A549 (cell line): ENCODE measurements at regions of chr20 and their contacts with region 1.

Region 1: DNA sequence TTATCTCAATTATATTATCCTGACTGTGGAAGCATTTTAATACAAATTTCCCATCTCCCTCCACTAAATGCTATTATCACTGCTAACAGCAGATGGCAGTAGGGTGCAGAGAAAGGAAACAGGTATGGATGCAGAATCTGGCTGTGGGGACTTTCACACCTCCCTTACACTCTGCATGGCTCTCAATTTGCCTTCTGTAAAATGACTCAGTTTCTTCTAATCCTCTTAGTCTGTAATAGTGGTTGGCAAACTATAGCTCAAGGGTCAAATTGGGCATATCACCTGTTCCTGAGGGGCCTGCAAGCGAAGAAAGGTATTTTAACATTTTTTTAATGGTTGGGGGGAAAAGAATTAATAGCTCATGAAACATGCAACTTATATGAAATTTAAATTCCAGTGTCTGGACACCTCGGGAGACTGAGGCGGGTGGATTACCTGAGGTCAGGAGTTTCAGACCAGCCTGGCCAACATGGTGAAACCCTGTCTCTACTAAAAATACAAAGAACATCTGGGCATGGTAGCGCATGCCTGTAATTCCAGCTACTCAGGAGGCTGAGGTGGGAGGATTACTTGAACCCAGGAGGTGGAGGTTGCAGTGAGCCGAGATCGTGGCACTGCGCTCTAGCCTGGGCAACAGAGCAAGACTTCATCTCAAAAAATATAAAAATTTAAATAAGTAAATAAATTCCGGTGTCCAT is 83.5 kb downstream of the ZMYND8 start:
- DNase-seq: peak; percentile 67 to 77
- ATAC-seq: peak; percentile 63 to 68; a peak in 4 of 6 replicates
- H3K4me3 ChIP-seq: no peak overlapping the region
- H3K27ac ChIP-seq: peak overlapping the region; percentile 84 to 93
- H3K4me1 ChIP-seq: peaks cover 61% of the 10 kb centered on the region
- CTCF ChIP-seq: peak; percentile 95
- EP300 ChIP-seq: no peak
- POLR2A ChIP-seq: no peak
- RAD21 ChIP-seq: peak; percentile 98 to 99

Region 2: DNA sequence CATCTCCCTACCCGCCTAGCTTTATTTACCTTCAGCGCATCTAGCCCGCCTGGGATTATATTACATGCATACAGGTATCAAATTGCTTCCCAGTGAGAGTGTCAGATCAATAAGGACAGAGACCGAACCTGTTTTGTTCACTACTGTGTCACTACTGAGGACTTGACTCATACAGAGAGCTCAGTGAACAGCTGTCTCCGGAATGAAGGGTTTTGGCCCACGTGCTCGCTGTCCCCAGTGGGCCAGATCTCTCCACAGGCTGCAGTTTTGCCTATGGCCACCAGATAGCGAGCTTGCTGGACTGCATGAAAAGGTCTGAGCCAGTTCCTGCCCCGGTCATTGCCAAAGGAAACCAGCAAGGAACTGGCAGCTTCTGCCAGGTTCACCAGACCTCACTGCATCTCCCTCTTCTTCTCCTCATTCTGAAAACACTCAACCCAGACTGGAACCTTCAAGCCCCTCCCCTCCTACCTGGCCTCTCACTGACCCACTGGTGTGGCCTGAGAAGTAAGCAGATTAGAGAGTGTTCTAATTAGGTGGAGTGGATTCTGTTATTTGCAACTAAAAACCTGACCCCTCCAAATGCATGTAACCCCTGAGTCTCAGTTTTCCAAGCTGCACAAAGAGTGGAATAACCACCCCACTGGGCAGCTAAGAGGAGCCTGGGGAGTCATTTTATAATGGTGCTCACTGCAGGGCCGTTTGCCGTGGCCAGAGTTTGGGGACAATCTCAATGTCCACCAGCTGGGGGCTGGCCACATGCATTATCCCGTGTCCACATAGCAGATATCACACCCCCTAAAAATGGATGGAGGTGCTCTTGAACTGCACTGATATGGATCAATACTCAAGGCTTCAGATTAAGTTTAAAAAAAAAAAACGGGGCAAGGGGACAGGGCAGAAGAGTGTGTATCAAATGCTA is 67.2 kb before region 1 on chr20:
- CTCF ChIA-PET with region 1: interaction called, 78 read pairs
- POLR2A ChIA-PET with region 1: no interaction called
- DNase-seq: peak; percentile 36 to 74
- ATAC-seq: peak; percentile 68 to 73
- H3K4me3 ChIP-seq: no peak overlapping the region
- H3K27ac ChIP-seq: peak overlapping the region; percentile 4 to 87; a peak in 3 of 6 replicates
- H3K4me1 ChIP-seq: peaks cover 16% of the 10 kb centered on the region
- CTCF ChIP-seq: peak; percentile 41
- EP300 ChIP-seq: no peak
- POLR2A ChIP-seq: no peak
- RAD21 ChIP-seq: peak; percentile 43 to 46; a peak in 3 of 5 replicates

Region 3: DNA sequence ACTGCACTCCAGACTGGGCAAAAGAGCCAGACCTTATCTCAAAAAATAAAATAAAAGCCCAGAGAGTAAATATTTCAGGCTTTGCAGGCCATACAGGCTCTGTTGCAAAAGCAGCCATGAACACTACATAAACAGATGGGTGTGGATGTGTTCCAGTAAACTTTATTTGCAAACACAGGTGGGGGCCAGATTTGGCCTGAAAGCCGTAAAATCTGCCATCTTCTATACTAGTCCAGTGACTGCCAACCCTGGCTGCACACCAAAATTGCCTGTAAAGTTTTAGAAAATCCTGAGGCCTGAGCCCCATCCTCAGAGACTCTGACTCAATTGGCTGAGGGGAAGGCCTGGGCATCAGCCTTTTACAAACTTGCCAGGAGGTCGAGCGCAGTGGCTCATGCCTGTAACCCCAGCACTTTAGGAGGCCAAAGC is 20.1 kb before region 1 on chr20:
- CTCF ChIA-PET with region 1: interaction called, 14 read pairs
- POLR2A ChIA-PET with region 1: interaction called, 4 read pairs
- DNase-seq: no peak
- ATAC-seq: no peak
- H3K4me3 ChIP-seq: no peak overlapping the region
- H3K27ac ChIP-seq: no peak overlapping the region
- H3K4me1 ChIP-seq: 0 out of 3 replicates have a peak, but pooled peaks cover 4% of the 10 kb centered on the region
- CTCF ChIP-seq: no peak
- EP300 ChIP-seq: no peak
- POLR2A ChIP-seq: no peak
- RAD21 ChIP-seq: no peak

Region 4: DNA sequence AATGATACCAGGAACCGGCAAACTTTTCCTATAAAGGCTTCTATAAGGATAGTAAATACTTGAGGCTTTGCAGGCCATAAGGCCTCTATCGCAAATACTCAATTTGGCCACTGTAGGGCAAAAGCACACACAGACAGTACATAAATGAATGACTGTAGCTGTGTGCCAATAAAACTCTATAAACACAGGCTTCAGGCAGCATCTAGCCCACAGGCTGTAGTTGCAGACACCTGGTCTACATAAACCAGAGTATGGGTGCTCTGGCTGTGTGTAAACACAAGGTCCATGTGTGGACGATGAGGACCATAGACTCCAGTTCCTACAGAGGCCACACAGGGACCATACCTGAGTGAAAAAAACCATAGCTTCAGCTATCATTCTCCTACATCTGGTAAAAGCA is 31.2 kb after region 1 on chr20:
- CTCF ChIA-PET with region 1: interaction called, 50 read pairs
- POLR2A ChIA-PET with region 1: no interaction called
- DNase-seq: peak in 1 of 2 experiments; percentile 55
- ATAC-seq: peak; percentile 79 to 83
- H3K4me3 ChIP-seq: no peak overlapping the region
- H3K27ac ChIP-seq: peak overlapping the region; percentile 92 to 94
- H3K4me1 ChIP-seq: peaks cover 35% of the 10 kb centered on the region
- CTCF ChIP-seq: no peak
- EP300 ChIP-seq: no peak
- POLR2A ChIP-seq: no peak
- RAD21 ChIP-seq: peak; percentile 21 to 29; a peak in 3 of 5 replicates

Region 5: GRCh38 chr20:47370850-47371676 is 98.0 kb after region 1 on chr20:
- CTCF ChIA-PET with region 1: interaction called, 17 read pairs
- POLR2A ChIA-PET with region 1: no interaction called
- DNase-seq: peak in 1 of 2 experiments; percentile 43
- ATAC-seq: peak; percentile 75 to 77; a peak in 5 of 6 replicates
- H3K4me3 ChIP-seq: no peak overlapping the region
- H3K27ac ChIP-seq: peak overlapping the region; percentile 70 to 92
- H3K4me1 ChIP-seq: peaks cover 32% of the 10 kb centered on the region
- CTCF ChIP-seq: no peak
- EP300 ChIP-seq: no peak
- POLR2A ChIP-seq: no peak
- RAD21 ChIP-seq: no peak